ENCODE measurements at regions of chr13 and their contacts with region 1.

Region 1: GRCh38 chr13:66994097-66994496 is 236.0 kb downstream of the PCDH9 start:
- DNase-seq: peak; percentile 76 to 97 (median 84)

Region 2: DNA sequence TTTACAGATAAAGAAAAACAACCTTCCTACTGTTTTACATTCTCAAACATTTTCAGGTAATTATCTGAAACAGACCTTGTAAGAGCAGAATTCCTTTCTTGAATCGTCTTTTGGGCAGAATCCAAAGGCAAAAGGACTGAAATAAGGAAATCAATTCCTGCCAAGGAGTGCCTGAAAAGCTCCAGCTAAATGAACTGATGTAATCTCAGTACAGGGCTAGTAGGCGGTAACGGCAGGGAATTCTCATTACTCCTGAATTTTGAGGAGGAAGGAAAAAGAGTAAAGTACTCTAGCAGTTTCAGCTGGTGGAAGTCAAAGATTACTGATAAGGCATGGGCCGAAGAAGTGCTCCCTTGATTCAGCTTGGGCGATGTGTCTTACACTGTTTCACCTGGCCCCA is 67.7 kb after region 1 on chr13:
- intact Hi-C with region 1: loop called (anchors 5 kb)
- DNase-seq: no peak

Region 3: DNA sequence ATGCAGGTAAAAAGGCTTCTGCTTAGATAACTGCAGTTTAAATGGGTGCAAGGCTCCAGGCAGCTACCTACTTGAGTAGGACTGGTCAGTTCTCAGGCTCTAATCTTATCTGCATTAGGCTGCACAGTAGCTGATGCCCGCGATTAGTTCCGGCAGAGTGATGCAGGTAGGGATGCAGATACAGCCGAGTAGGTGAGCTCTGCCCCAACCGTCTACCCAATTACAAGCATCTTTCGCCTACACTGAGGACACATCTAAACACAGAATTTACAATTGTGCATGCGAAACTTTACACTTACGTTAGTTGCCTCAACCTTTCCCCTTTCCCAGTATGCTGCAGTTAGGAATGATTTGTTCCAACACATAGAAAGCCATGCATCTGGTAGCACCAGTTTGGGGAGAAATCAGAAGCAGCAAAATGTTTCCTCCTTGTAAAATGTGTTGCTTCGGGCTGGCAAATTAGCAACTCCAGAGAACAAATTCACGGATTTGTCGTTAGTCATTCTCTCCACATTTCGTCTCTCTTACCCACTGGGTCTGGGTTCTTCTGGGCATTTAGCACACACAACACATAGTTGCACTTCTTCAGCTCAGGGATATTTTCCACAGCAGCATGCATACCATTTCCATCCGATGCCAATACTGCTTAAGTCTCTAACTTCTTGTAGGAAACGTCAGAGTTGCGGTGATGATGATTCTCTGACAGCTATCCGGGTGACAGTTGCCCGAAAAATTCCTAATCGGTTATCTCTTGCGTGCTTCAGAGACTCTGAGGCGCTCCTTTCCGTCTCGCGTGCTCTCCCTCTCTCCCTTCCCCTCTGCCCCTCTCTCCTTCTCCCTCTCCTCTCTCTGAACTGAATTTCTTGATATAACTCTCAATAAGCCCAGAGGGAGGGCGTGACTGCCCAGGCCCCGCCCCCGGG is 235.6 kb after region 1 on chr13 and contains the start of gene PCDH9:
- intact Hi-C with region 1: loop called (anchors 5 kb)
- DNase-seq: peak in 4 of 10 donors; percentile 16 to 71 (median 42)